ENCODE measurements at regions of chr11 and their contacts with region 1.

Region 1: GRCh38 chr11:9506489-9507276 is 45.9 kb downstream of the ZNF143 start:
- DNase-seq: peak; percentile 39
- ATAC-seq: peak; percentile 80
- H3K4me3 ChIP-seq: no peak overlapping the region
- H3K27ac ChIP-seq: no peak overlapping the region
- H3K4me1 ChIP-seq: peaks cover 4% of the 10 kb centered on the region
- H3K27me3 ChIP-seq: no peaks in the 10 kb centered on the region
- CTCF ChIP-seq: peak; percentile 78 to 93 (median 92)
- EP300 ChIP-seq: no peak
- POLR2A ChIP-seq: no peak
- RAD21 ChIP-seq: peak; percentile 97

Region 2: GRCh38 chr11:8911029-8911826 is 595.5 kb before region 1 on chr11 and contains the start of gene AKIP1:
- CTCF ChIA-PET with region 1: interaction called, 16 read pairs
- POLR2A ChIA-PET with region 1: no interaction called
- RAD21 ChIA-PET with region 1: interaction called, 12 read pairs
- SMC1A ChIA-PET with region 1: no interaction called
- in situ Hi-C with region 1: no loop called
- intact Hi-C with region 1: no loop called
- DNase-seq: peak; percentile 65
- ATAC-seq: peak; percentile 88
- H3K4me3 ChIP-seq: peak within 1 kb of the TSS; percentile 95
- H3K27ac ChIP-seq: peak within 1 kb of the TSS; percentile 65
- H3K4me1 ChIP-seq: peaks cover 11% of the 10 kb centered on the region
- H3K27me3 ChIP-seq: no peaks in the 10 kb centered on the region; a peak in 1 of 4 replicates
- CTCF ChIP-seq: no peak
- EP300 ChIP-seq: no peak
- POLR2A ChIP-seq: peak; percentile 61; the same call in 1 of the 2 replicates
- RAD21 ChIP-seq: no peak
- polyA plus RNA-seq, gene AKIP1: 5.1 to 14.7 TPM

Region 3: DNA sequence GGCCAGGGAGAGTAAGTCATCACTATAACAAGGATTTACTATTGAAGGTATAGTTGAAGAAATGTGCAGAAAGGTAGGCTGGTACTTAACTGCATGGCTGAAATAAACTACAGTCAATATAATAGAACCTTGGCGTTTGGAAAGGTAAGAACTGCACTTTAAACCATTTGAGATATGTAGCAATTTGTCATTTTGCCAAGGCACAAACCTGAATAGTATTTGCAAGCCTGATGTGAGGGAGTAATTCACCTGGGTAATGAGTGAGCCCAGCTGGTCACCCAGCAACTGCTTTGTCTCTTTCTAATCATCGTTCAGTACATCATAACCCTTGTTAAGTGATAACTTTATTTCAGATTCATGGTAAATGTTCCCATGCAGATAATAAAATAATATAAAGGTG is 353.0 kb before region 1 on chr11:
- CTCF ChIA-PET with region 1: interaction called, 14 read pairs
- POLR2A ChIA-PET with region 1: no interaction called
- RAD21 ChIA-PET with region 1: interaction called, 9 read pairs
- SMC1A ChIA-PET with region 1: no interaction called
- in situ Hi-C with region 1: no loop called
- intact Hi-C with region 1: no loop called
- DNase-seq: no peak
- ATAC-seq: no peak
- H3K4me3 ChIP-seq: no peak overlapping the region
- H3K27ac ChIP-seq: no peak overlapping the region
- H3K4me1 ChIP-seq: no peaks in the 10 kb centered on the region
- H3K27me3 ChIP-seq: no peaks in the 10 kb centered on the region
- CTCF ChIP-seq: no peak
- EP300 ChIP-seq: no peak
- POLR2A ChIP-seq: no peak
- RAD21 ChIP-seq: no peak

Region 4: DNA sequence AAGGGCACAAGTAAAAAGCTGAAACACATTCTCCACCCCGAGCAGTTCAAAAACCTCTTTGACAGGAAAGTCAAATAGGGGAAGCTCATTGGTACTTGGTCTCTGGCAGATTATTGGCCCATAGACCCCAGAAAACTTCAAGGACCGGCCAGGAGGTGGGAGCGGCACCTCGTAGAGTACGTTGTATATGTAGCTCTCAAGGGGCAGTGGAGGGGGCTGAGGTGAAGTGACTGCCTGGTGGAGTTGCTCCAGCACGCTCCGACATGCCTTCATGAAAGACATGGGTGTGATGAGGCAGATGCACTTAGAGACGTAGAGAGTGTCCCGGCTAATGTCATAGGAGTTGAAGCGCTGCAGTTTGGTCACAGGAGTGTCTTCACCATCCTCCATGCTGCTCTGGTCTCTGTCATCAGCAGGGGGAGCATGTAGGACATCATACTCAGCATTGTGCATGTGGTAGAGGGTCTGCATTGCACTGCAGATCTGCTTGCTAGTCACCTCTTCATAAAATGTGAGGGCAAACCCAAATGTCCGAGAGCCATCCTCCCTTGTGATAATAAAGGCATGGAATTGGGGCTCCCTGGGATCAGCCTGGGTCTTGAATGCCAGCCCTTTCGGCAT is 302.9 kb before region 1 on chr11:
- CTCF ChIA-PET with region 1: interaction called, 16 read pairs
- POLR2A ChIA-PET with region 1: no interaction called
- RAD21 ChIA-PET with region 1: interaction called, 12 read pairs
- SMC1A ChIA-PET with region 1: interaction called, 6 read pairs
- in situ Hi-C with region 1: no loop called
- intact Hi-C with region 1: no loop called
- DNase-seq: no peak
- ATAC-seq: peak; percentile 42; the same call in 1 of the 3 replicates
- H3K4me3 ChIP-seq: no peak overlapping the region
- H3K27ac ChIP-seq: no peak overlapping the region
- H3K4me1 ChIP-seq: peaks cover 9% of the 10 kb centered on the region
- H3K27me3 ChIP-seq: no peaks in the 10 kb centered on the region
- CTCF ChIP-seq: peak; percentile 24 to 38 (median 36); a peak in 4 of 6 replicates
- EP300 ChIP-seq: no peak
- POLR2A ChIP-seq: no peak
- RAD21 ChIP-seq: peak; percentile 49

Region 5: GRCh38 chr11:9438611-9439010 is 68.1 kb before region 1 on chr11:
- CTCF ChIA-PET with region 1: interaction called, 11 read pairs
- POLR2A ChIA-PET with region 1: interaction called, 3 read pairs
- RAD21 ChIA-PET with region 1: interaction called, 5 read pairs
- SMC1A ChIA-PET with region 1: interaction called, 19 read pairs
- in situ Hi-C with region 1: no loop called
- intact Hi-C with region 1: no loop called
- DNase-seq: no peak
- ATAC-seq: no peak
- H3K4me3 ChIP-seq: no peak overlapping the region
- H3K27ac ChIP-seq: no peak overlapping the region
- H3K4me1 ChIP-seq: no peaks in the 10 kb centered on the region
- H3K27me3 ChIP-seq: no peaks in the 10 kb centered on the region
- CTCF ChIP-seq: no peak
- EP300 ChIP-seq: no peak
- POLR2A ChIP-seq: no peak
- RAD21 ChIP-seq: no peak

Region 6: GRCh38 chr11:9489080-9489765 is 17.5 kb before region 1 on chr11:
- CTCF ChIA-PET with region 1: interaction called, 34 read pairs
- POLR2A ChIA-PET with region 1: interaction called, 5 read pairs
- RAD21 ChIA-PET with region 1: interaction called, 12 read pairs
- SMC1A ChIA-PET with region 1: interaction called, 13 read pairs
- in situ Hi-C with region 1: no loop called
- intact Hi-C with region 1: no loop called
- DNase-seq: no peak
- ATAC-seq: no peak
- H3K4me3 ChIP-seq: no peak overlapping the region
- H3K27ac ChIP-seq: no peak overlapping the region
- H3K4me1 ChIP-seq: no peaks in the 10 kb centered on the region
- H3K27me3 ChIP-seq: no peaks in the 10 kb centered on the region
- CTCF ChIP-seq: no peak
- EP300 ChIP-seq: no peak
- POLR2A ChIP-seq: no peak
- RAD21 ChIP-seq: no peak

Region 7: DNA sequence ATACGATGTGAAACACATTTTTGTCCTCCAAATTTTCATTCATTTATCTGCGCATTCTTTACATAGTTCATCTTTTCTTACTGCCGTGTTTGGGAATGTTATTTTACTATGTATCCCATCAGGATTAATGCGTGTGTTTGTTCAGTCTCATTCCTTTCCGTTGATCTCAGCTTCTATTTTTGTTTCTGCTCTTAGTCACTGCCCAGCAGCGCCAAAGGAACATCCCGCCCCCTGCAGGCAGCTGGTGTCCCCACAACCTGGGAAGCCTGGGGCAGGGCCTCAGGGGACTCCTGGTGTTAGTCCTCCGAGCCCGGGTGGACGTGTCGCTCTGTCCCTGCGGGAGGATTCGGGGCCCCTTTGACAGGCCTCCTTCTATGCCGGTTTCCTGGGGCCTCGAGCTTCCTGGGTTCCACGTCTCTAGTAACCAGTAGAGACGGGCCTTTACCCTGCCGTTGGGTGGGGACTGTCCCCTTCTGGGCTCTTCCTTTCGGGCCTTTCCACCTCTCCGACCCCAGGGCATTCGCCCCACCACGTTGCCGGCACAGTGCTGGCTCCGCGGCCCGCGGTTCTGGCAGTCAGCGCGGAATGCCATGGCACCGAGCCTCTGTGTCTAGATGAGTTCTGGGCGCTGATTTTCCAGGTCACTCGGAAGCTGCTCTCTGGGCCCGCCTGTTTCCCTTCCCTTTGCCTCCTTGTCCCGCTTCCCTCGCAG is 106.6 kb after region 1 on chr11:
- CTCF ChIA-PET with region 1: interaction called, 21 read pairs
- POLR2A ChIA-PET with region 1: no interaction called
- RAD21 ChIA-PET with region 1: interaction called, 19 read pairs
- SMC1A ChIA-PET with region 1: interaction called, 12 read pairs
- in situ Hi-C with region 1: no loop called
- intact Hi-C with region 1: no loop called
- DNase-seq: no peak
- ATAC-seq: peak; percentile 70
- H3K4me3 ChIP-seq: peak overlapping the region; percentile 68
- H3K27ac ChIP-seq: peak overlapping the region; percentile 91
- H3K4me1 ChIP-seq: peaks cover 43% of the 10 kb centered on the region
- H3K27me3 ChIP-seq: no peaks in the 10 kb centered on the region
- CTCF ChIP-seq: peak; percentile 94 to 97 (median 96)
- EP300 ChIP-seq: no peak
- POLR2A ChIP-seq: peak; percentile 60
- RAD21 ChIP-seq: peak; percentile 93

Measured in GM12878 (cell line).